Mammary epithelial cell (primary cell): ENCODE measurements at regions of chr1 and their contacts with region 1.

Region 1: GRCh38 chr1:6438047-6438525 is 13.5 kb downstream of the ESPN start:
- DNase-seq: peak; percentile 58
- H3K4me3 ChIP-seq: no peak overlapping the region
- H3K27ac ChIP-seq: no peak overlapping the region
- H3K4me1 ChIP-seq: peaks cover 4% of the 10 kb centered on the region
- H3K27me3 ChIP-seq: no peaks in the 10 kb centered on the region
- CTCF ChIP-seq: peak; percentile 90 to 96

Region 2: DNA sequence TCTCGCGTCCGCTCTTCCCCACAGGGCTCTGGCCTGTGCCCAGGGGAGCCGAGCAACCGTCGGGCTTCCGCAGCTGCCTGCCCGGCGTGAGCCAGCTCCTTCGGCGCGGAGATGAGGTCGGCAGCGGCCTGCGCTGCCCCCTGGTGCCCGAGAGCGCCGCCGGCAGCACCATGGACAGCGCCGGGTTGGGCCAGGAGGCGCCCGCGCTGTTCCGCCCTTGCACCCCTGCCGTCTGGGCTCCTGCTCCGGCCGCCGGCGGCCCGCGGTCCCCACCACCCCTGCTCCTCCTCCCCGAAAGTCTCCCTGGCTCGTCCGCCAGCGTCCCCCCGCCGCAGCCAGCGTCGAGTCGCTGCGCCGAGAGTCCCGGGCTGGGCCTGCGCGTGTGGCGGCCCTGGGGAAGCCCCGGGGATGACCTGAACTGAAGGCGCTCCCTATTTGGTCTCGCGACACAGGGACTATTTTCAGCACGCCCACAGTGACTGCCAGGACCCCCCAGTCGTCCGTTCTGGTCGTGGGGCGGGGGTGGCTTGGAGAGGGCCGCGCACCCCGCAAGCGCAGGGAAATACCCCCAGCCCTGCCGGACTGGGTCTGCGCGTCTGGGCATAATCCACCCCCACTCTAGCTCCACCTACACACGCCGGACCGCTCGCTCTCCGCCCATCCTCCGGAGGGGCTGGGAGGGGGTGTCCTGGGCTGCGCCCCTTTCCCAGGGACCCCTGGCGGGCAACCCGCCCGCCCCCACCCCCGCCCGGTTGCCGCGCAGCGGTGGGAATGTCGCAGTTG is 192.8 kb before region 1 on chr1:
- CTCF ChIA-PET with region 1: no interaction called
- dilution Hi-C with region 1: no loop called
- in situ Hi-C with region 1: no loop called
- intact Hi-C with region 1: loop called (anchors 1 kb)
- DNase-seq: peak; percentile 77
- H3K4me3 ChIP-seq: peak overlapping the region; percentile 30 to 39 (median 33)
- H3K27ac ChIP-seq: no peak overlapping the region
- H3K4me1 ChIP-seq: peaks cover 18% of the 10 kb centered on the region
- H3K27me3 ChIP-seq: peaks cover 20% of the 10 kb centered on the region
- CTCF ChIP-seq: peak; percentile 71 to 93

Region 3: DNA sequence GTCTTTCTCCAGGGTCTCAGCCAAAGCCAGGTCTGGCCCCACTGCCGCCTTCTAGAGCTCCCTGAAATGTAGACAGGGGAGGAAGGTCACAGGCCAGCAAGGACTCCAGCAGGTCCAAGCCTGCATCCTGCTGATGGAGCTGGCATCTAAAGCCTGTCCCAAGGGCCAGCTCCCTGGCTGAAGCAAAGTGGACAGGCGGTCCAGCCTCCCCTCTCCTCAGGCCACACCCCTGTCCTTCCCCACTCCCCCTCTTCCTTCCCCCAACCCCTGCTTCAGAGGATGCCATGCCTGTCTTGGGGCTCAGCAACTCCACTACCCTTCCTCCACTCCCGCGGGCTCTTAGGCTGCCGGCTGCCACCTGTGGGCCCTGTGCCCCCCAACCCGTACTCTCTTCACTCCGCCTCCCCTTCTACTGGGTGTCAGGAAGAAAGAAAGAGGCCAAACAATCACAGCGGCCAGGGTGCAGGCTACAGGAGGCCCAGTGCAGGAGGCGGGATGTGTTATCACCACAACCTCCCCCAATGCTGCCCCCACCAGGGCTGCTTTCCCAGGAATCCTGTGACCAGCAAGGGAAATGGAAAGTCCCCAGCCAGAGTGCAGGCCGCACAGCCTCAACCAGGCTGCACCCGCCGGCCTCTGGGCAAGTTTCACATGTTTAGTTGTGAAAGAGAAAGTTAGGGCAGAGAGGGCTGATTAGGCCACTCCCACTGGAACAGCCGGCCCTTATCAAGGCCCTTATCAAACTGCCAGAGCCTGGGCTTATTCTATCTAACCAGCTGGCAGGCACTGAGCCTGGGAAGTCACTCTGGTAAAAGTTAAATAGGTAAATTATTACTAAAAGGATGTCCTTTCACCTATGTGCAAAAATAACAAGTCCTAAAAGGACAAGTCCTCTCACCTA is 78.6 kb before region 1 on chr1:
- CTCF ChIA-PET with region 1: interaction called, 3 read pairs
- dilution Hi-C with region 1: no loop called
- in situ Hi-C with region 1: loop called in 1 of 2 experiments (anchors 5 kb)
- intact Hi-C with region 1: loop called (anchors 1 kb)
- DNase-seq: peak; percentile 73
- H3K4me3 ChIP-seq: no peak overlapping the region
- H3K27ac ChIP-seq: peak overlapping the region; percentile 54
- H3K4me1 ChIP-seq: peaks cover 48% of the 10 kb centered on the region
- H3K27me3 ChIP-seq: no peaks in the 10 kb centered on the region
- CTCF ChIP-seq: no peak

Region 4: GRCh38 chr1:6401673-6402072 is 36.4 kb before region 1 on chr1:
- CTCF ChIA-PET with region 1: no interaction called
- dilution Hi-C with region 1: no loop called
- in situ Hi-C with region 1: no loop called
- intact Hi-C with region 1: loop called (anchors 1 kb)
- DNase-seq: peak; percentile 67
- H3K4me3 ChIP-seq: no peak overlapping the region
- H3K27ac ChIP-seq: no peak overlapping the region
- H3K4me1 ChIP-seq: no peaks in the 10 kb centered on the region
- H3K27me3 ChIP-seq: no peaks in the 10 kb centered on the region
- CTCF ChIP-seq: no peak

Region 5: DNA sequence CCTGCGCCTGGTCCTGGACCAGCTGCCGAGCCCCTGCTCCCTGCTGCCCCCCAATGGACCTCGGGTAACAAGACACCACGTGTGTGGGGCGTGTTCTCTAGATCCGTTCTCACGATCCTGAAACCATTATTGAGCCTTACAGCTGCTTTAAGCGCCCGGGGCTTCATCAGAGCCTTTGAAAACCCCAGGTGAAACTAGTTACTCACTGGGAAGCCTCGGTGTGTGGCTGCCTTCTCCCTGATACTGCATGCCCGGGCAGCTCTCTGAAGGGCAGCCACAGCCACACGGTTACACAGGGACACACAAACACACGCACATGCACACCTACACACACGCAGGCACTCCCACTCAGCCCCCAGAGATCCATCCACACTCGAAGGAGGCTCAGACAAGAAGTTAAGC is 23.6 kb before region 1 on chr1:
- CTCF ChIA-PET with region 1: interaction called, 13 read pairs
- dilution Hi-C with region 1: no loop called
- in situ Hi-C with region 1: no loop called
- intact Hi-C with region 1: no loop called
- DNase-seq: peak; percentile 100
- H3K4me3 ChIP-seq: no peak overlapping the region
- H3K27ac ChIP-seq: peak overlapping the region; percentile 96
- H3K4me1 ChIP-seq: peaks cover 51% of the 10 kb centered on the region
- H3K27me3 ChIP-seq: no peaks in the 10 kb centered on the region
- CTCF ChIP-seq: peak; percentile 62 to 73

Region 6: DNA sequence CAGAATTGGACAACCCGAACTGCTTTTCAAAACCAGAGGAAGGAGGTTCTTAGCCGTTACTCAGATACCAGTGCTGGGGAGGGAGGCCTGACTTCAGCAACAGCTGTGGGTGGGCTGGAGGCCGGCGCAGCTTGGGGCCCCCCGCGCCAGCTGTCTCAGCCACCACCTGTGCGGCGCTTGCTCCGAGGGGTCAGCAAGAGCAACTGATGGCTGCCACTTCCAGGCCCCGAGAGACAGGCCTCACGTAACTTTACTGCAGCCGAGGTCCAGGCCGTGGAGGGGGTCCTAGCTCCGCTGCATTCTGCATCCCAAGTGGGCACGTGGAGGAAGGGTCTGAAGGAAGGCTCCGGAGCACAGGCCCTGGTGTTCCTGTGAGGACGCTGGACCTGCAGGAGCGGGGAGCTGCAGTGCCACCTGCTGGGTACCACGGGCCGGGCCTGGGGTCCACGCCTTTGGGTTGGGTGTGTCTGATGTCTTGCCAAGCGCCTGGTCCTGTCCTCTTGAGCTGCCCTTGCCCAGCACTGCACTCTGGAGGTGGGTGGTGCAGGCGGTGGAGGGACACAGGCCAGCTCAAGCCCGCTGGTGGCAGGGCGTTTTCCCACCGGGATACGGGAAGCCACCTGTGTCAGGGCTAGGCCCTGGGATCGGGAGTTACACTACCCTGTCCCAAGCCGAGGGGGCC is 196.4 kb after region 1 on chr1:
- CTCF ChIA-PET with region 1: no interaction called
- dilution Hi-C with region 1: no loop called
- in situ Hi-C with region 1: no loop called
- intact Hi-C with region 1: no loop called
- DNase-seq: peak; percentile 16
- H3K4me3 ChIP-seq: no peak overlapping the region
- H3K27ac ChIP-seq: no peak overlapping the region
- H3K4me1 ChIP-seq: no peaks in the 10 kb centered on the region
- H3K27me3 ChIP-seq: no peaks in the 10 kb centered on the region
- CTCF ChIP-seq: peak; percentile 35 to 67